ENCODE measurements at regions of chr12 and their contacts with region 1.

Region 1: GRCh38 chr12:14884458-14884878 is 1.2 kb downstream of the MGP start:
- DNase-seq: peak in 8 of 9 donors; percentile 59 to 93 (median 88)
- ATAC-seq: peak; percentile 95
- H3K4me3 ChIP-seq: no peak overlapping the region
- H3K4me3 Mint-ChIP-seq: peak overlapping the region in 9 of 10 donors; percentile 62 to 83 (median 77)
- H3K27ac ChIP-seq: peak overlapping the region; percentile 60
- H3K27ac Mint-ChIP-seq: peak overlapping the region in 8 of 9 donors; percentile 49 to 95 (median 92)
- H3K4me1 ChIP-seq: peaks cover 0 to 27% of the 10 kb centered on the region in 2 donors
- H3K4me1 Mint-ChIP-seq: peaks cover 15 to 75% (median 60%) of the 10 kb centered on the region in 7 donors
- H3K27me3 ChIP-seq: no peaks in the 10 kb centered on the region
- H3K27me3 Mint-ChIP-seq: peaks cover 0 to 29% (median 8%) of the 10 kb centered on the region in 5 donors

Region 2: DNA sequence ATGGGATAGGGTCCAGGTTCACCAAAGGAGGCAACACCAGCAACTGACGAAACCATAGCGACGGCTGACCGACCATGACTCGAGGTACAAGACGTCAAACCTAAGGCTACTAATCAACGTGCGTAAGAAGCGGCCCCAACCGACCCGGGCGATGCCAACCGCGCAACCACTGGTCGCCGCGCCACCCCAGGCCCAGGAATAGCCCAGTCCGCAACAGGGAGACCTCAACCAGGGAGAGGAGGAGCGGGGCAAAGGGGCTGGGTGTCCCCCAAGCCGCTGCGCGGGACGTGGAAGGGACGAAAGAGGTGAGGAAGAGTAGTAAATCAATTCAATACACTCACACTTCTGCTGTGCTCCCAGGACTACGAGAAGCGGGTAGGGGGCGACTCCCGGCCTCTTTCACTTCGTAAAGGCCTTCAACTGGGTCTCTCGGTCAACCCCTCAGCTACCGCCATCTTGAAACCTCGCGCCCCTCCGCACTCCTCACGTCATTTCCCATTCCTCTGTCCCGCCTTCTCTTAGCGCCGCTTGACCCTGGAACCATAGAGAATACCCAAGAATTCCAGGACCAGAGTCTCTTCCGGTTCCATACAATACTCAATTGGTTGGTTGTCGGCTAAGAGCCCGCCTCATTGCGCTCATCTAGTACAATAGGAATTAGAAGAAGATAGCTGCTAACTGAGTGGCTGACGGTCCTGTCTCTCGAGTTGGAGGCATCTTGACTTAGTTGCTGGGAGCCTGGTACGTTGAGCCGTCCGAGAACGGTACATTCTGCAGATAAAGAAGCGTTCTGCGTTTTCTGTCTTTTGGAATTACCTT is 81.2 kb before region 1 on chr12 and contains the starts of genes C12orf60 and WBP11:
- CTCF ChIA-PET with region 1: no interaction called
- POLR2A ChIA-PET with region 1: no interaction called
- intact Hi-C with region 1: loop called in 1 of 2 experiments (anchors 1 kb)
- DNase-seq: peak; percentile 56 to 95 (median 91)
- ATAC-seq: peak; percentile 98
- H3K4me3 ChIP-seq: peak within 1 kb of the TSS; percentile 80
- H3K4me3 Mint-ChIP-seq: no peak within 1 kb of the TSS
- H3K27ac ChIP-seq: peak within 1 kb of the TSS; percentile 97
- H3K27ac Mint-ChIP-seq: no peak within 1 kb of the TSS
- H3K4me1 ChIP-seq: peaks cover 14 to 19% of the 10 kb centered on the region in 2 donors
- H3K4me1 Mint-ChIP-seq: peaks cover 0 to 26% (median 10%) of the 10 kb centered on the region in 7 donors
- H3K27me3 ChIP-seq: no peaks in the 10 kb centered on the region
- H3K27me3 Mint-ChIP-seq: no peaks in the 10 kb centered on the region
- total RNA-seq, gene C12orf60: 0.22 to 1.7 (median 1.2) TPM in 4 of 5 experiments, not detected in the other
- total RNA-seq, gene WBP11: 77.9 to 129 (median 90.4) TPM

Region 3: GRCh38 chr12:14853961-14854360 is 30.5 kb before region 1 on chr12:
- CTCF ChIA-PET with region 1: interaction called, 3 read pairs
- POLR2A ChIA-PET with region 1: no interaction called
- intact Hi-C with region 1: loop called in 1 of 2 experiments (anchors 1 kb)
- DNase-seq: no peak
- ATAC-seq: no peak
- H3K4me3 ChIP-seq: no peak overlapping the region
- H3K4me3 Mint-ChIP-seq: no peak overlapping the region
- H3K27ac ChIP-seq: no peak overlapping the region
- H3K27ac Mint-ChIP-seq: no peak overlapping the region
- H3K4me1 ChIP-seq: no peaks in the 10 kb centered on the region
- H3K4me1 Mint-ChIP-seq: peaks cover 0 to 2% (median 0%) of the 10 kb centered on the region in 7 donors
- H3K27me3 ChIP-seq: no peaks in the 10 kb centered on the region
- H3K27me3 Mint-ChIP-seq: no peaks in the 10 kb centered on the region

Region 4: GRCh38 chr12:14896521-14897169 is 12.2 kb after region 1 on chr12:
- CTCF ChIA-PET with region 1: no interaction called
- POLR2A ChIA-PET with region 1: interaction called, 5 read pairs
- intact Hi-C with region 1: loop called in 1 of 2 experiments (anchors 1 kb)
- DNase-seq: no peak
- ATAC-seq: no peak
- H3K4me3 ChIP-seq: no peak overlapping the region
- H3K4me3 Mint-ChIP-seq: no peak overlapping the region
- H3K27ac ChIP-seq: no peak overlapping the region
- H3K27ac Mint-ChIP-seq: no peak overlapping the region
- H3K4me1 ChIP-seq: no peaks in the 10 kb centered on the region
- H3K4me1 Mint-ChIP-seq: peaks cover 0 to 10% (median 3%) of the 10 kb centered on the region in 7 donors
- H3K27me3 ChIP-seq: no peaks in the 10 kb centered on the region
- H3K27me3 Mint-ChIP-seq: no peaks in the 10 kb centered on the region

Region 5: GRCh38 chr12:14910090-14910915 is 25.8 kb after region 1 on chr12:
- CTCF ChIA-PET with region 1: interaction called, 4 read pairs
- POLR2A ChIA-PET with region 1: interaction called, 3 read pairs
- intact Hi-C with region 1: loop called in 1 of 2 experiments (anchors 2 kb)
- DNase-seq: peak in 1 of 9 donors; percentile 55
- ATAC-seq: no peak
- H3K4me3 ChIP-seq: no peak overlapping the region
- H3K4me3 Mint-ChIP-seq: peak overlapping the region in 2 of 10 donors; percentile 19 to 30
- H3K27ac ChIP-seq: no peak overlapping the region
- H3K27ac Mint-ChIP-seq: peak overlapping the region in 8 of 9 donors; percentile 20 to 94 (median 62)
- H3K4me1 ChIP-seq: no peaks in the 10 kb centered on the region
- H3K4me1 Mint-ChIP-seq: peaks cover 8 to 34% (median 25%) of the 10 kb centered on the region in 7 donors
- H3K27me3 ChIP-seq: no peaks in the 10 kb centered on the region
- H3K27me3 Mint-ChIP-seq: no peaks in the 10 kb centered on the region

Region 6: GRCh38 chr12:14920475-14921126 is 36.1 kb after region 1 on chr12:
- CTCF ChIA-PET with region 1: interaction called, 4 read pairs
- POLR2A ChIA-PET with region 1: no interaction called
- intact Hi-C with region 1: loop called in 1 of 2 experiments (anchors 1 kb)
- DNase-seq: peak in 1 of 9 donors; percentile 29
- ATAC-seq: peak; percentile 80
- H3K4me3 ChIP-seq: no peak overlapping the region
- H3K4me3 Mint-ChIP-seq: peak overlapping the region in 8 of 10 donors; percentile 14 to 59 (median 38)
- H3K27ac ChIP-seq: peak overlapping the region; percentile 1
- H3K27ac Mint-ChIP-seq: peak overlapping the region; percentile 19 to 86 (median 76)
- H3K4me1 ChIP-seq: peaks cover 6 to 19% of the 10 kb centered on the region in 2 donors
- H3K4me1 Mint-ChIP-seq: peaks cover 18 to 38% (median 32%) of the 10 kb centered on the region in 7 donors
- H3K27me3 ChIP-seq: no peaks in the 10 kb centered on the region
- H3K27me3 Mint-ChIP-seq: no peaks in the 10 kb centered on the region

Measured in naive thymus-derived CD4-positive, alpha-beta T cell (primary cell).